ENCODE measurements at regions of chr16 and their contacts with region 1.

Region 1: GRCh38 chr16:2155091-2156021 is at the start of gene TRAF7:
- DNase-seq: peak; percentile 100
- H3K4me3 Mint-ChIP-seq: peak within 1 kb of the TSS; percentile 96
- H3K27ac Mint-ChIP-seq: peak within 1 kb of the TSS; percentile 82
- H3K4me1 Mint-ChIP-seq: peaks cover 29% of the 10 kb centered on the region
- H3K27me3 Mint-ChIP-seq: no peaks in the 10 kb centered on the region
- CTCF ChIP-seq: no peak
- total RNA-seq, gene TRAF7: 87.4 and 98.6 TPM in 2 replicates

Region 2: GRCh38 chr16:1971796-1972489 is 183.4 kb before region 1 on chr16 and contains the start of gene TBL3:
- CTCF ChIA-PET with region 1: no interaction called
- POLR2A ChIA-PET with region 1: interaction called, 13 read pairs
- intact Hi-C with region 1: no loop called
- DNase-seq: peak; percentile 92
- H3K4me3 Mint-ChIP-seq: peak within 1 kb of the TSS; percentile 92
- H3K27ac Mint-ChIP-seq: peak within 1 kb of the TSS; percentile 95
- H3K4me1 Mint-ChIP-seq: peaks cover 13% of the 10 kb centered on the region
- H3K27me3 Mint-ChIP-seq: no peaks in the 10 kb centered on the region
- CTCF ChIP-seq: no peak
- total RNA-seq, gene TBL3: 25.8 and 26.8 TPM in 2 replicates

Region 3: GRCh38 chr16:2016407-2016922 is 138.9 kb before region 1 on chr16:
- CTCF ChIA-PET with region 1: interaction called, 3 read pairs
- POLR2A ChIA-PET with region 1: interaction called, 16 read pairs
- intact Hi-C with region 1: no loop called
- DNase-seq: no peak
- H3K4me3 Mint-ChIP-seq: peak overlapping the region; percentile 47
- H3K27ac Mint-ChIP-seq: peak overlapping the region; percentile 96
- H3K4me1 Mint-ChIP-seq: peaks cover 6% of the 10 kb centered on the region
- H3K27me3 Mint-ChIP-seq: no peaks in the 10 kb centered on the region
- CTCF ChIP-seq: peak; percentile 39

Region 4: GRCh38 chr16:2115591-2115973 is 39.8 kb before region 1 on chr16:
- CTCF ChIA-PET with region 1: no interaction called
- POLR2A ChIA-PET with region 1: no interaction called
- intact Hi-C with region 1: no loop called
- DNase-seq: no peak
- H3K4me3 Mint-ChIP-seq: no peak overlapping the region
- H3K27ac Mint-ChIP-seq: no peak overlapping the region
- H3K4me1 Mint-ChIP-seq: peaks cover 5% of the 10 kb centered on the region
- H3K27me3 Mint-ChIP-seq: no peaks in the 10 kb centered on the region
- CTCF ChIP-seq: no peak

Region 5: GRCh38 chr16:2166757-2167638 is 11.6 kb after region 1 on chr16:
- CTCF ChIA-PET with region 1: interaction called, 7 read pairs
- POLR2A ChIA-PET with region 1: interaction called, 32 read pairs
- intact Hi-C with region 1: no loop called
- DNase-seq: no peak
- H3K4me3 Mint-ChIP-seq: no peak overlapping the region
- H3K27ac Mint-ChIP-seq: no peak overlapping the region
- H3K4me1 Mint-ChIP-seq: peaks cover 10% of the 10 kb centered on the region
- H3K27me3 Mint-ChIP-seq: no peaks in the 10 kb centered on the region
- CTCF ChIP-seq: no peak

Region 6: DNA sequence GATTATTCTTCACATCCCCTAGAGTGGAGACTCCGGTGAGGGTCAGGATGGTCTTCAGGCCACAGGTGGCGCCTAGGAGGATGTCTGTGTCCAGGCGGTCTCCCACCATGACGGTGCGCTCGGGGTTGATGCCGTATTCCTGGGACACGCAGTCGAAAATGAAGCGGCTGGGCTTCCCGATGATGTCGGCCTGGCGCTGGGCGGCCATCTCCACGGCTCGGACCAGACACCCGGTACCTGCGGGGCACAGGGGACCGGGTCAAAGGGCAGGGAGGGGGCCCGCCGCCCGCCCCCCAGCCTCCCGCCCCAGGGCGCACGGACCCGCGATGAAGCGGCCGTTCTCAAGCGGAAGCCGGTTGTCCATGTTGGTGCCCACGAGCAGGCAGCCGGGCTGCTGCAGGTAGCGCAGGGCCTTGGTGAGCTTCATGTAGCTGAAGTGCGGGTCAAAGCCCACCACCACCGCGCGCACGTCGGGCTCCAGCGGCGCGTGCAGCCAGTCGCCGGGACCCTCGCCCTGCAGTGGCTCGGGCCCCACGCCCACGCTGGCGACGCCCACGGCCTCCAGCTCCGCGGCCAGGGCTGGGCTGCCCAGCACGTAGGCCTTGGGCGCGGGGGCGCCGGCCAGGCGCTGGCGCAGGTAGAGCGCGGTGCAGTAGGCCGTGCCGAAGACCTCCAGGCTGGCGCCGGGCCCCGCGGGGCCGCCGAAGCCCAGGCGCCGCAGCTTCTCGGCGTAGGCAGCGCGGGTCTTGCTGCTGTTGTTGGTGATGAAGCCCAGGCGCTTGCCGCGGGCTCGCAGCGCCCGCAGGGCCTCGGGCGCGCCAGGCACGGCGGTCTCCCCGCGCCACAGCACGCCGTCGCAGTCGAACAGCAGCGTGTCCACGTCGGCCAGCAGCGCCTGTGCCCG is 58.7 kb after region 1 on chr16:
- CTCF ChIA-PET with region 1: no interaction called
- POLR2A ChIA-PET with region 1: interaction called, 34 read pairs
- intact Hi-C with region 1: loop called (anchors 5 kb)
- DNase-seq: no peak
- H3K4me3 Mint-ChIP-seq: peak overlapping the region; percentile 77
- H3K27ac Mint-ChIP-seq: peak overlapping the region; percentile 33
- H3K4me1 Mint-ChIP-seq: peaks cover 18% of the 10 kb centered on the region
- H3K27me3 Mint-ChIP-seq: no peaks in the 10 kb centered on the region
- CTCF ChIP-seq: no peak

Region 7: GRCh38 chr16:2531767-2532493 is 376.6 kb after region 1 on chr16:
- CTCF ChIA-PET with region 1: no interaction called
- POLR2A ChIA-PET with region 1: interaction called, 13 read pairs
- intact Hi-C with region 1: no loop called
- DNase-seq: peak; percentile 97
- H3K4me3 Mint-ChIP-seq: peak overlapping the region; percentile 98
- H3K27ac Mint-ChIP-seq: peak overlapping the region; percentile 100
- H3K4me1 Mint-ChIP-seq: peaks cover 11% of the 10 kb centered on the region
- H3K27me3 Mint-ChIP-seq: no peaks in the 10 kb centered on the region
- CTCF ChIP-seq: no peak

Region 8: DNA sequence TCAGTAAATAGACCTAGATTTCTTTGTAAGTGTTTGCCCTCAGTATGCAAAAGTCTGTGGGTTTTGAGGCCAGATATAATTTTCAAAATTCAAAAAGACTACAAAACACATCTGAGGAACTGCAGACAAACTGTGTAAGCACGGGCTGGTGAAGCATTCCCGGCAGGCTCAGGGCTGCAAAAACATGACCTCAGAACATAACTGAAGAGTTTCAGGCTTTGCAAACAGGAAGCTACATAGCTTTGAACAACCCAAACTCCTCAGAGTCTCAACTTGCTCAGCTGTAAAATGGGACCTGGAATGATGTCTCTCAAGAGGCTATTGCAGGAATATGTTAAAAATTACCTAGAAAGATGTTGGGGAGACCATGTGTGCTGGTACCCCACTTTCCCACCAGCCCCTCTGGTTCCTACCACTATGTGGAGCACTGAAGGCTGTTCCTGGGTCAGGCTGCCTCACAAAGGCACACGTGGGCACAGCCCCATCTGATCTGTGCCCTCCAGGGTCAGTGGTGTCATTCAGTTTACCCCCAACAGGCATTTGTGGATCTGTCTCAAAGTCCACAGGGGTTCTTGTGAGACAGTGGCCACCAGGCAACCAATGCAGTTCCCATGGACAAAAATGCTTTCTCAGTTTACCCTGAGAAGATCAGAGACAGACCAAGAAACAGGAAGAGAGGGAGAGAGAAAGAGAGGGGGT is 1652.2 kb after region 1 on chr16:
- CTCF ChIA-PET with region 1: no interaction called
- POLR2A ChIA-PET with region 1: no interaction called
- intact Hi-C with region 1: no loop called
- DNase-seq: no peak
- H3K4me3 Mint-ChIP-seq: no peak overlapping the region
- H3K27ac Mint-ChIP-seq: no peak overlapping the region
- H3K4me1 Mint-ChIP-seq: peaks cover 11% of the 10 kb centered on the region
- H3K27me3 Mint-ChIP-seq: no peaks in the 10 kb centered on the region
- CTCF ChIP-seq: no peak

Measured in MCF 10A (cell line).